CD14-positive monocyte (primary cell): ENCODE measurements at regions of chr7 and their contacts with region 1.

Region 1: GRCh38 chr7:105046414-105046813 is 32.4 kb downstream of the KMT2E start:
- DNase-seq: no peak
- H3K4me3 ChIP-seq: no peak overlapping the region
- H3K4me3 Mint-ChIP-seq: no peak overlapping the region
- H3K27ac ChIP-seq: peak overlapping the region in 1 of 2 donors; percentile 12
- H3K27ac Mint-ChIP-seq: no peak overlapping the region
- H3K4me1 ChIP-seq: no peaks in the 10 kb centered on the region
- H3K4me1 Mint-ChIP-seq: peaks cover 8% of the 10 kb centered on the region
- H3K27me3 ChIP-seq: no peaks in the 10 kb centered on the region
- H3K27me3 Mint-ChIP-seq: no peaks in the 10 kb centered on the region
- CTCF ChIP-seq: no peak

Region 2: DNA sequence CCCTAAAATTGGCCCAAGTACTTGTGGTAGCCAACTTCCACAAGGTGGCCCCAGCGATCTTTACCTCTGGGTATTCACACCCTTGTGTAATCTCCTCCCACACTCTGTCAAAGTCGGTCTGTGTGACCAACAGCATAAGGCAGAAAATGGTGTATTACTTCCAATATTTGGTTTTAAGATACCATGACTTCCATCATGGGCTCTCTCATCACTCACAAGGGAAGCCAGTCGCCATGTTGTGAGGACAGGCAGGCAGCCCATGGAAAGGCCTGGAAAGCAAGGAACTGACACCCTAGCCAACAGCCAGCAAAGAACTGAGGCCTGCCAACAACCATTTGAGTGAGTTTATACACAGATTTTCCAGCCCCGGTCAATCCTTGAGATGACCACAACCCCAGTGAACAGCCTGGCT is 123.4 kb before region 1 on chr7:
- intact Hi-C with region 1: loop called in 1 of 2 experiments (anchors 5 kb)
- DNase-seq: peak; percentile 81 to 89 (median 86)
- H3K4me3 ChIP-seq: no peak overlapping the region
- H3K4me3 Mint-ChIP-seq: no peak overlapping the region
- H3K27ac ChIP-seq: no peak overlapping the region
- H3K27ac Mint-ChIP-seq: peak overlapping the region in 4 of 7 donors; percentile 28 to 68 (median 52)
- H3K4me1 ChIP-seq: peaks cover 0 to 2% of the 10 kb centered on the region in 2 donors
- H3K4me1 Mint-ChIP-seq: peaks cover 4% of the 10 kb centered on the region
- H3K27me3 ChIP-seq: no peaks in the 10 kb centered on the region
- H3K27me3 Mint-ChIP-seq: no peaks in the 10 kb centered on the region
- CTCF ChIP-seq: peak; percentile 78

Region 3: DNA sequence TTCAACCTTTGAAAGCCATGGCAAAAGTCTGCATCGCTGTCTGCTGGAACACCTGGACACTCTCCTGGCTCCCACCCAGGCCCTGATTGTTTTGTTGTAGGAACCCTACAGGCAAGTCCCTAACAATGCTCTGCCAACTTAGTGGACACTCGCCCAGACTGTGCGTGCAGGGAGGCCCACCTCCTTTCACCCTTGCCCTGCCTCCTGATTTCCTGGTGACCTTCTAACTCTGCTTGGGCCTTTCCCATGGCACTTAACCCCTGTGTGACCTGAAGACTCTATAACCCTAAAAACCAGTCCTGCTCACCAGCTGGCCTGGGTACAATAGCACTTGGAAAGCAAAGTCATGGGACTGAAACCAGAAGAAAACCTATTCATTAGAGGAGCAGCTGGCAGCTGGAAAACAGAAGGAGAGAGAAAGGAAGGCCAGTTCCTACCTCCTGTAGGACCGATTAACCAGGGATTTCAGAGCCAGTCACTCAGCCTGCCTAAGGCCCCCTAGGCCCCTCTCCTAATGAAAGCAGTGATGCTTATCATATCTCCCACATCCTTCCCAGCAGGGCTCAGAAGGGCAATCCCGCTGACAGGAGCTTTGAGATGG is 115.1 kb before region 1 on chr7:
- intact Hi-C with region 1: loop called in 1 of 2 experiments (anchors 10 kb)
- DNase-seq: no peak
- H3K4me3 ChIP-seq: no peak overlapping the region
- H3K4me3 Mint-ChIP-seq: no peak overlapping the region
- H3K27ac ChIP-seq: no peak overlapping the region
- H3K27ac Mint-ChIP-seq: peak overlapping the region in 3 of 7 donors; percentile 52 to 76 (median 66)
- H3K4me1 ChIP-seq: peaks cover 11 to 14% of the 10 kb centered on the region in 2 donors
- H3K4me1 Mint-ChIP-seq: peaks cover 16% of the 10 kb centered on the region
- H3K27me3 ChIP-seq: no peaks in the 10 kb centered on the region
- H3K27me3 Mint-ChIP-seq: no peaks in the 10 kb centered on the region
- CTCF ChIP-seq: no peak

Region 4: DNA sequence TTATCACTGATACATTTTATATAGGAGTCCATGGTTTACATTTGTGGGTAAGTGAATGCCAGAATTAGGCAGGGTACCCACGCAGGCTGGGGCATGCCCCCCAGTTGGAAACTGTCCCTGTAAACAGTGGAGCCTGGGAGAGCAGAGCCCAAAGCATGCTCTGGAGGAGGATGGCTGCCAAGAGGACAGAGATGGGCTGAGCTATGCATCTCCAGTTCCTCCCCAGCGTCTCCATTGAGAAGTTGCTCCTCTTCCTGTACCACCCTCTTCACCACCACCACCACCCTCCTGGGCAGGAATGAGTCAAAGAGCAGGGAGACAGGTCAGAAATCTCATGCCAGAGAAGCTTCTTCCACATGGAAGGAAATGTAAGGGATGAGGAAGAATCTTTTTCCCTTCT is 100.1 kb before region 1 on chr7:
- intact Hi-C with region 1: no loop called
- DNase-seq: no peak
- H3K4me3 ChIP-seq: no peak overlapping the region
- H3K4me3 Mint-ChIP-seq: no peak overlapping the region
- H3K27ac ChIP-seq: peak overlapping the region; percentile 93 to 99
- H3K27ac Mint-ChIP-seq: peak overlapping the region; percentile 99 to 100 (median 100)
- H3K4me1 ChIP-seq: peaks cover 47 to 62% of the 10 kb centered on the region in 2 donors
- H3K4me1 Mint-ChIP-seq: peaks cover 56% of the 10 kb centered on the region
- H3K27me3 ChIP-seq: no peaks in the 10 kb centered on the region
- H3K27me3 Mint-ChIP-seq: no peaks in the 10 kb centered on the region
- CTCF ChIP-seq: no peak